MCF 10A (cell line): ENCODE measurements at regions of chr6 and their contacts with region 1.

Region 1: DNA sequence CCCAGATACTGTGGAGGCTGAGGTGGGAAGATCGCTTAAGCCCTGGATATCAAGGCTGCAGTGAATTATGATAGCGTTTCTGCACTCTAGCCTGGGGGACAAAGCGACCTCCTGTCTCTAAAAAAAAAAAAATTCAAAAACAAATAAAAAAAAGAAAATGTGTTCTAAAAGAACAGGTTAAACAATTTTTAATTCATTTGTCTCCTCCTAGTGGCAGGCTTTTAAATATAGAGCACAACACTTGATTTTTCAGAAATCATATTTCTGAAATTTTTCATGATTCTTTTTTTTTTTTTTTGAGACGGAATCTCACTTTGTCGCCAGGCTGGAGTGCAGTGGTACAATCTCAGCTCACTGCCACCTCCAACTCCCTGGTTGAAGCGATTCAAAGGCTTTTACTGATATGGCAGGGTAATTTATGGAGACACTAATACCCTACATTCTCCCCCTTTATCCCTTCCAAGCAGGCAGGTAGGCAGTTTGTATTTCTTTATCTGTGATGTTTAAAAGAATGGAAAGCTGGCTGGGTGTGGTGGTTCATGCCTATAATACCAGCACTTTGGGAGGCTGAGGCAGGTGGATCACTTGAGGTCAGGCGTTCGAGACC is 8.7 kb upstream of the GTF3C6 start:
- DNase-seq: peak; percentile 33
- H3K4me3 Mint-ChIP-seq: no peak overlapping the region
- H3K27ac Mint-ChIP-seq: no peak overlapping the region
- H3K4me1 Mint-ChIP-seq: peaks cover 16% of the 10 kb centered on the region
- H3K27me3 Mint-ChIP-seq: no peaks in the 10 kb centered on the region
- CTCF ChIP-seq: peak; percentile 46

Region 2: DNA sequence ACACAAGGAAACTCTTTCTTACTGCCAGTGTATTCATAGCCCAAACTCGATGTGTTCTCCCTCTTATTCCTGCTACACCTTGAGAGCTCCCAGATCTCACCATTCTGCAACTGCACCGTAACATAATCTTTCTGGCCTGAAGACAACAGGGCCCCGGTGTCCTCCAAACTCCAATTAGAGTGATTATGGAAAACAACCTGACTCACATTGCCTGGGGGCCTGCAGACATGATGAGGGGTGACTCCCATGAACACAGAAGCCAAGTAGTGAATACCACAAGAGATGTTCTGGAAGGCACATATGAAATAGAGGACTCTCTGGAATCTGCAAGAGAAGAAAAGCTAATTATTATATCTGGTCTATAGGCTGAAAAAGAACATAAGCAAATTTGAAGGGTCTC is 493.1 kb before region 1 on chr6:
- CTCF ChIA-PET with region 1: no interaction called
- POLR2A ChIA-PET with region 1: no interaction called
- intact Hi-C with region 1: loop called (anchors 2 kb)
- DNase-seq: peak; percentile 35
- H3K4me3 Mint-ChIP-seq: no peak overlapping the region
- H3K27ac Mint-ChIP-seq: no peak overlapping the region
- H3K4me1 Mint-ChIP-seq: peaks cover 10% of the 10 kb centered on the region
- H3K27me3 Mint-ChIP-seq: no peaks in the 10 kb centered on the region
- CTCF ChIP-seq: no peak

Region 3: GRCh38 chr6:110528101-110528929 is 421.5 kb before region 1 on chr6:
- CTCF ChIA-PET with region 1: interaction called, 54 read pairs
- POLR2A ChIA-PET with region 1: no interaction called
- intact Hi-C with region 1: loop called (anchors 1 kb)
- DNase-seq: peak; percentile 76
- H3K4me3 Mint-ChIP-seq: no peak overlapping the region
- H3K27ac Mint-ChIP-seq: peak overlapping the region; percentile 66
- H3K4me1 Mint-ChIP-seq: peaks cover 21% of the 10 kb centered on the region
- H3K27me3 Mint-ChIP-seq: no peaks in the 10 kb centered on the region
- CTCF ChIP-seq: peak; percentile 76

Region 4: GRCh38 chr6:110688661-110689268 is 261.0 kb before region 1 on chr6:
- CTCF ChIA-PET with region 1: interaction called, 123 read pairs
- POLR2A ChIA-PET with region 1: no interaction called
- intact Hi-C with region 1: loop called (anchors 1 kb)
- DNase-seq: peak; percentile 45
- H3K4me3 Mint-ChIP-seq: no peak overlapping the region
- H3K27ac Mint-ChIP-seq: no peak overlapping the region
- H3K4me1 Mint-ChIP-seq: peaks cover 16% of the 10 kb centered on the region
- H3K27me3 Mint-ChIP-seq: no peaks in the 10 kb centered on the region
- CTCF ChIP-seq: no peak

Region 5: DNA sequence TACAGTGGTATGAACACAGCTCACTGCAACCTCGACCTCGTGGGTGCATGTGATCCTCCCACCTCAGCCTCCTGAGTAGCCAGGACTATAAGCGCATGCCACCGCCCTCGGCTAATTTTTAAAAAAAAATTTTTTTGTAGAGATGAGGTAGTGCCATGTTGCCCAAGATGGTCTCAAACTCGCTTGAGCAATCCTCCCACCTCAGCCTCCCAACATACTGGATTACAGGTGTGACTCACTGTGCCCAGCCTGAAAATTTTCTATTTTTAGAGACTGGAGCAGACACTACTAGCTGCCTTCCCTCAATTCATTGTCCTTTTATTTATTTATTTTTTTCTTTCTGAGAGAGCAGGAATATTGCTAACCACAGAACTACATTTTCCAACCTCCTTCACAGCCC is 11.6 kb before region 1 on chr6:
- CTCF ChIA-PET with region 1: interaction called, 14 read pairs
- POLR2A ChIA-PET with region 1: no interaction called
- intact Hi-C with region 1: no loop called
- DNase-seq: peak; percentile 91
- H3K4me3 Mint-ChIP-seq: no peak overlapping the region
- H3K27ac Mint-ChIP-seq: no peak overlapping the region
- H3K4me1 Mint-ChIP-seq: no peaks in the 10 kb centered on the region
- H3K27me3 Mint-ChIP-seq: no peaks in the 10 kb centered on the region
- CTCF ChIP-seq: no peak

Region 6: GRCh38 chr6:110971468-110971867 is 21.7 kb after region 1 on chr6:
- CTCF ChIA-PET with region 1: interaction called, 12 read pairs
- POLR2A ChIA-PET with region 1: no interaction called
- intact Hi-C with region 1: no loop called
- DNase-seq: no peak
- H3K4me3 Mint-ChIP-seq: no peak overlapping the region
- H3K27ac Mint-ChIP-seq: no peak overlapping the region
- H3K4me1 Mint-ChIP-seq: peaks cover 7% of the 10 kb centered on the region
- H3K27me3 Mint-ChIP-seq: no peaks in the 10 kb centered on the region
- CTCF ChIP-seq: no peak

Region 7: DNA sequence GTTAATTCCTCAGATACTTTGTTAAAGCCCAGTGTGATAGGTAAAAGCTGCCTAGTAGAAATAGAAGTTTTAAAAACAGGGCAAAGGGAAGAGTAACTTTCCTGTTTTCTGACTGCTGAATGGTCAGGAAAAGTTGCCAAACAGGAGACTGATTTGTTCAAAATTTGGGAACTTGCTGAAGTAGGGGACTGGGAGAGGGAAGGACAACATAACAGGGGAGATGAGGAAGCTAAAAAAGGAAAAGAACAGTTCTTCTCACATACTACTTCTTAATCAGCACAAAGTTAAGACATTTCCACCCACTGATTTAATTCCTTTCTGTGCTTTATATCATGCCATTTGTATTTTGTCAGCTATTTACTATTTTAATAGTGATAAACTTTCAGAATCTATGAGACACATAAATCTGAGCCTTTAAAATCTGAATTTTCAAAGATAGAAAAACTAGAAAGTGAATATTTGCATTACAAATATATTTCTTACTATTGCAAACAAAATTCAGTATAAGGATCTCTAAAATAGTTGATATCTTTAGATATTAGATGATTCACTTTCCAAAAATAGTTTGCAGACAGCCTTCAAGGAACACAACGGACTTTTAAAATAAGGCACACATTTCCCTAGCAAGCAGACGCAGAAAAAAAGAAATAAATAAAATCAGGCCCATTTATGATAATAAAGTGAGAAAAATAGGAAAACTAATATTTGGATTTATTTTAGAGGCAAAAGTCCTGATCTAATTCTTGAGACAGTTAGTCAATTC is 100.7 kb after region 1 on chr6:
- CTCF ChIA-PET with region 1: no interaction called
- POLR2A ChIA-PET with region 1: no interaction called
- intact Hi-C with region 1: no loop called
- DNase-seq: no peak
- H3K4me3 Mint-ChIP-seq: no peak overlapping the region
- H3K27ac Mint-ChIP-seq: no peak overlapping the region
- H3K4me1 Mint-ChIP-seq: no peaks in the 10 kb centered on the region
- H3K27me3 Mint-ChIP-seq: no peaks in the 10 kb centered on the region
- CTCF ChIP-seq: no peak